ENCODE measurements at regions of chr10 and their contacts with region 1.

Region 1: GRCh38 chr10:103685880-103686669 is 169.3 kb downstream of the SH3PXD2A start:
- DNase-seq: peak; percentile 85
- H3K4me3 Mint-ChIP-seq: no peak overlapping the region
- H3K27ac Mint-ChIP-seq: no peak overlapping the region
- H3K4me1 Mint-ChIP-seq: peaks cover 12% of the 10 kb centered on the region
- H3K27me3 Mint-ChIP-seq: peaks cover 11% of the 10 kb centered on the region

Region 2: GRCh38 chr10:103598654-103599115 is 87.4 kb before region 1 on chr10:
- CTCF ChIA-PET with region 1: interaction called, 21 read pairs
- DNase-seq: peak; percentile 45
- H3K4me3 Mint-ChIP-seq: no peak overlapping the region
- H3K27ac Mint-ChIP-seq: no peak overlapping the region
- H3K4me1 Mint-ChIP-seq: no peaks in the 10 kb centered on the region
- H3K27me3 Mint-ChIP-seq: no peaks in the 10 kb centered on the region

Region 3: DNA sequence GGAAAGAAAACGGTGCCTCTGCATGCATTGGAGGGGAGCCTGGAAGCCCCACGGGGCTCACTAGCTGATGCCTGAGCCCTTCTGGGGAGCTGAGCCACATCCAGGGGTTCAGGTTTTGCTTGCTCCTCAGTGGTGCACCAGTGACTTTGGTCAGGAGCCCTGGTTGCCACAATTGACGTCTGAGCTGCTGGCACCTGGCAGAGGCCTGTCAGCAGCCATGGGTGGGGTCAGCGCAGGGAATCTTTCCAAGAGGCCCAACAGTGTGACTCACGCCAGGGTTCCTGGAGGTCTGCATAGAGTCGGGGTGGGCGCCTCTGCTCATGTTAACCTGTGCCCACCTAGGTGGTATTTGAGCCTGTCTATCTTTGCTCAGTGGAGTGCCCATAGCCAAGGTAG is 53.8 kb before region 1 on chr10:
- CTCF ChIA-PET with region 1: interaction called, 18 read pairs
- DNase-seq: no peak
- H3K4me3 Mint-ChIP-seq: no peak overlapping the region
- H3K27ac Mint-ChIP-seq: no peak overlapping the region
- H3K4me1 Mint-ChIP-seq: peaks cover 5% of the 10 kb centered on the region
- H3K27me3 Mint-ChIP-seq: no peaks in the 10 kb centered on the region

Region 4: GRCh38 chr10:103666087-103666761 is 19.9 kb before region 1 on chr10:
- CTCF ChIA-PET with region 1: interaction called, 18 read pairs
- DNase-seq: peak; percentile 32
- H3K4me3 Mint-ChIP-seq: no peak overlapping the region
- H3K27ac Mint-ChIP-seq: no peak overlapping the region
- H3K4me1 Mint-ChIP-seq: peaks cover 14% of the 10 kb centered on the region
- H3K27me3 Mint-ChIP-seq: no peaks in the 10 kb centered on the region

Region 5: DNA sequence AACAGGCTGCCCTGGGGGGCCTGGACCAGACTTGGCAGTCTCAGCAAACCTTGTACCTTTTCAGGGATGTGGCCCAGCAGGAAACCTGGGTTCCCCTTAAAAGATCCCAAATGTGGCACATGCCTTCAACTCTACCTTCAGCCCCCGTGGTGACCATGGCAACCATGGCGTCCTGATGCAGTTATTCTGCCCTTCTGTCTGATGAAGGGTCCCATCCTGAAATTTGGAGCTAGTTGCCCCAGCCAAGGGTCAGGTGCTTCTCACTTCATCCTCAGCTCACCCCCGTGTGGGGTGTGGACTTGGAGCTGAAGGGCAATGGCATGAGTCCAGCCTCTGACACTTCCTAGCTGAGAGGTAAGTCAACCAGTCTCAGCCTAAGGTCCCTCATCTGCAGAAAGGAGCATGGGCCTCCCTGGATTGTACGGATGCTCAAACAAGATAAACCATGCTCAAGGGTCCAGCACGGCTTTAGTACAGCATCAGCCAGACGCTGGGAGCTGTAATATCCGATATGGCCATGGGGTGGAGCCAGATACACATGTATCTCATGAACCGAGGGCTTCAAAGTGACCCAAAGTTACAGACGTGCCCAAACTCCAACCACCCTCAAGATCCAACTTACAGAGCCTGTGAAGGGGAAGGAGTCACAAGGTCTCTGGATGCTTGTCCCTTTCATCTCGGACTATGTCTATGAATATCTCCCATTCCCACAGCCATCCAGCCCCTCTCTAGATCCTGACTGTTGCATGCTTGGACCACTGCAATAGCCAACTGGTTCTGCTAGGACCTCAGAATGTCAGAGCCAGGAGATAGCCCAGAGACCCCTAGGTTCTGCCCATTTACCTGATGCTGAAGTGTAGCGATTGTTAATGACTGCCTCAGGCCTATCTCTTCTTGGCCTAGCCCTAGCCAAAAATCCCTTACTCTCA is 26.8 kb after region 1 on chr10:
- CTCF ChIA-PET with region 1: interaction called, 23 read pairs
- DNase-seq: peak; percentile 90
- H3K4me3 Mint-ChIP-seq: no peak overlapping the region
- H3K27ac Mint-ChIP-seq: no peak overlapping the region
- H3K4me1 Mint-ChIP-seq: no peaks in the 10 kb centered on the region
- H3K27me3 Mint-ChIP-seq: peaks cover 29% of the 10 kb centered on the region

Region 6: GRCh38 chr10:103724771-103725170 is 38.7 kb after region 1 on chr10:
- CTCF ChIA-PET with region 1: no interaction called
- DNase-seq: no peak
- H3K4me3 Mint-ChIP-seq: no peak overlapping the region
- H3K27ac Mint-ChIP-seq: no peak overlapping the region
- H3K4me1 Mint-ChIP-seq: no peaks in the 10 kb centered on the region
- H3K27me3 Mint-ChIP-seq: peaks cover 50% of the 10 kb centered on the region